AG04449 (cell line): ENCODE measurements at regions of chrX and their contacts with region 1.

Region 1: GRCh38 chrX:23901805-23902204 is 5.9 kb downstream of the APOO start:
- DNase-seq: no peak
- H3K4me3 ChIP-seq: no peak overlapping the region
- CTCF ChIP-seq: peak; percentile 45

Region 2: DNA sequence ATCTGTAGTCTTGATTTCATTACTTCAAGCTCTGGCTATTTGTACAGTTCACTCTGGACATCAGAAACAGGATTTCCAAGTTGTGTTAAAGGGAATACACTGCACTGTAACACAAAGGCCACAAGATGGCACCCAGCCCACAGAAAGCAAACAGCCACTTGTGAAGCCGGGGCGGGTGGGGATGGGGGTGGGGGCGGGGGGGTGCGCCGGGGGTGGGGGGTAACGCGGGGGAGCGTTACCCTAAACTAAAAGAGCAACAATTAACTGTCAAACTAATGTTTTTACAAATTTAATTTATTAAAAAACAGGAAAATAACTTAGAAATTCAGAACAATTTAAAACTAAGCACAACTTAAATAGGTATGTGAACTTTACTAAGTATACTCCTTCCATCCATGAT is 207.2 kb before region 1 on chrX:
- CTCF ChIA-PET with region 1: interaction called, 189 read pairs
- POLR2A ChIA-PET with region 1: no interaction called
- DNase-seq: no peak
- H3K4me3 ChIP-seq: no peak overlapping the region
- CTCF ChIP-seq: peak; percentile 49

Region 3: DNA sequence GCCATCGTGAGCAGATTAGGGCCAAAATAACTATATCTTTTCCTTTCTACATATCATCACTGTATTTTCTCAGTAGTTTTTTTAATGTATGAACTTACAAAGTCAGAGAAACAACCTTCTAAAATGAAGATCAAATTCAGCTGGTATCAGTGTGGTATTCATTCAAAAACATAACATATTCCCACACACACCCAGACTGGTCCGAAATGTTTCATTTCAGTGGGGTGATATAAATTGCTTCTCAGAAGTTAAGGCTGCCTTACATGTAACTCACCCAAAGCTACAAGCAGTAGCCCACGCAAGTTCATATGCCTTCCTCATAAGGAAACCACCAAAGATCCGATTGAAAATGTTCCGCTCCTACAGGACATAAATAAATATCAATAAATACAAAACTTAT is 196.6 kb before region 1 on chrX:
- CTCF ChIA-PET with region 1: interaction called, 189 read pairs
- POLR2A ChIA-PET with region 1: no interaction called
- DNase-seq: no peak
- H3K4me3 ChIP-seq: no peak overlapping the region
- CTCF ChIP-seq: no peak

Region 4: DNA sequence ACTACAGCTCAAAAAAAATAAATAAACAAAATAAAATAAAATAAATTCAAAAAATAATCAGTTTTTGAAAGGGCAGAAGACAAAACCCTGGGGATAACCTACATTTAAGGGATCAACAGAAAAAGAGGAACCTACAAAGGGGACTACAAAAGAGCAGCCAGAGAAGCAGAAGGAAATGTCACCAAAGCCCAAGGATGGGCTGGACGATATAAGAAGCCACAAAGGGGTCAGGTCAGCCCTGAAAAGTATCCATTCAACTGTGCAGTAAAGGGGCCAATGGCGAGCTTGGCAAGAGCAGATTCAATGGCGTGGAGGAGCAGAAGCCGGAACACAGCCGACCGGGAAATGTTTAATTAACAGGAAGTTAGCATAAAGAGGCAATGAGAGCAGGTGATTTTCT is 175.6 kb before region 1 on chrX:
- CTCF ChIA-PET with region 1: interaction called, 25 read pairs
- POLR2A ChIA-PET with region 1: no interaction called
- DNase-seq: no peak
- H3K4me3 ChIP-seq: no peak overlapping the region
- CTCF ChIP-seq: no peak

Region 5: GRCh38 chrX:23742697-23743622 is 158.8 kb before region 1 on chrX and contains the start of gene ACOT9:
- CTCF ChIA-PET with region 1: interaction called, 30 read pairs
- POLR2A ChIA-PET with region 1: interaction called, 9 read pairs
- DNase-seq: peak; percentile 75
- H3K4me3 ChIP-seq: peak within 1 kb of the TSS; percentile 76
- CTCF ChIP-seq: no peak

Region 6: GRCh38 chrX:23782863-23783568 is 118.8 kb before region 1 on chrX and contains the start of gene SAT1:
- CTCF ChIA-PET with region 1: interaction called, 111 read pairs
- POLR2A ChIA-PET with region 1: interaction called, 33 read pairs
- DNase-seq: peak; percentile 51
- H3K4me3 ChIP-seq: peak within 1 kb of the TSS; percentile 76
- CTCF ChIP-seq: peak; percentile 66

Region 7: GRCh38 chrX:23930894-23931689 is 29.3 kb after region 1 on chrX:
- CTCF ChIA-PET with region 1: no interaction called
- POLR2A ChIA-PET with region 1: no interaction called
- DNase-seq: no peak
- H3K4me3 ChIP-seq: no peak overlapping the region
- CTCF ChIP-seq: no peak

Region 8: DNA sequence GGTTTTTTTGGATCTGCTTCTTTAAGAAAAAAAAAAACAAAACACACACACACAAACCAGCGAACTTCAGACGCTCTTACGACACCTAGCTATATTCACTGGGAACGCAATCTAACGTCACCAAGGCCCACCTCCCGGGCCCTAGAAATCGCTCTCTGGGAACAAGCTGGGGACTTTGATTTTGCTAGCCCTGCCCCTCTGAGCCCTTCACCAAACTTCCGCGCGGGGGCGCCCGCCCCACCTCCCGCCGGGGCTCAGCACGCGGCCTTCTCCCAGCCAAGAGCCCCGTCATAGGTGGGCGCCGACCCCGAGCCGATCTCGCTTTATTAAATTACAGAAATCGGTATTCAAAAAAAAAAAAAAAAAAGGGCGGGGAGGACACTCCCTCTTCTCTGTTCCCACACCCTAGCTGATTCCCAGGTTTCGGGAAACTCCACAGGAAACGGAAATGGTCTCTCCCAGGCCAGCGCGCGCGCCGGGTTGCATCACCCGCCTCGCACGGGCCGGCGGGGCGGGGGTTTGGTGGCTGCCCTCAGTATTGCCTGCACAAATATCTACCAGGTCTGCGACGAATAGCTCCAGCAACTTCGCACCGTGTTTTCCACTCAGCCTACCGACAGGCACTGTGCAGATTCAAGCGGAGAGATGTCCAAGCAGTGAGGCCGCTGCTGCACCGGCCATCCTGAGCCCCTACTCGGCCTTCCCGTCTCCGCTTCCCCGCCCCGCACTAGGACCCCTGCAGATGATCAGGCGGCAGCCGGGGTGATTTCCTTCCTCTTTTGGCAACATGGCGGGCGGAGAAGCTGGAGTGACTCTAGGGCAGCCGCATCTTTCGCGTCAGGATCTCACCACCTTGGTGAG is 152.6 kb after region 1 on chrX and contains the start of gene EIF2S3:
- CTCF ChIA-PET with region 1: interaction called, 28 read pairs
- POLR2A ChIA-PET with region 1: no interaction called
- DNase-seq: peak; percentile 84
- H3K4me3 ChIP-seq: no peak within 1 kb of the TSS; the same call in 1 of the 2 replicates
- CTCF ChIP-seq: peak; percentile 72